Activated naive CD4-positive, alpha-beta T cell treated with anti-CD3 and anti-CD28 coated beads for 36 hours (primary cell): ENCODE measurements at regions of chr3 and their contacts with region 1.

Region 1: DNA sequence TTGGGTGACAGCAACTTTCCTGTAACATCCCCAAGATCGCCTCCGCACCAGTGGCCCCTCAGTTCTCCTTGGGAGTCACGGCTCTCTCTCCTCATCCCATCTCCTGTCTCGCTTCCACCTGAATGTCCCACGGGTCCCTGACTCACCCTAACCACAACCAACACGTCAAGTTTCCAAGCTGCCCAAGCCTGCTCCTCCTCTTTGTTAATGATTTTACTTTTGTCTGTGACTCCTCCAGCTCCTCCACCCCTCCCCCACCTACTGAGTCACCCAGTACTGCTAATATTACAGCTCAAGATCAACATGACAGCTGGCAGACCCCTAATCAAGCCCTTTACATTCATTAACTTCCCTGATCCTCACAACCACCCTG is 39.3 kb downstream of the BDH1 start:
- DNase-seq: peak; percentile 69
- H3K4me3 Mint-ChIP-seq: no peak overlapping the region
- H3K27ac Mint-ChIP-seq: peak overlapping the region; percentile 87
- H3K4me1 Mint-ChIP-seq: peaks cover 12% of the 10 kb centered on the region
- H3K27me3 Mint-ChIP-seq: no peaks in the 10 kb centered on the region

Region 2: DNA sequence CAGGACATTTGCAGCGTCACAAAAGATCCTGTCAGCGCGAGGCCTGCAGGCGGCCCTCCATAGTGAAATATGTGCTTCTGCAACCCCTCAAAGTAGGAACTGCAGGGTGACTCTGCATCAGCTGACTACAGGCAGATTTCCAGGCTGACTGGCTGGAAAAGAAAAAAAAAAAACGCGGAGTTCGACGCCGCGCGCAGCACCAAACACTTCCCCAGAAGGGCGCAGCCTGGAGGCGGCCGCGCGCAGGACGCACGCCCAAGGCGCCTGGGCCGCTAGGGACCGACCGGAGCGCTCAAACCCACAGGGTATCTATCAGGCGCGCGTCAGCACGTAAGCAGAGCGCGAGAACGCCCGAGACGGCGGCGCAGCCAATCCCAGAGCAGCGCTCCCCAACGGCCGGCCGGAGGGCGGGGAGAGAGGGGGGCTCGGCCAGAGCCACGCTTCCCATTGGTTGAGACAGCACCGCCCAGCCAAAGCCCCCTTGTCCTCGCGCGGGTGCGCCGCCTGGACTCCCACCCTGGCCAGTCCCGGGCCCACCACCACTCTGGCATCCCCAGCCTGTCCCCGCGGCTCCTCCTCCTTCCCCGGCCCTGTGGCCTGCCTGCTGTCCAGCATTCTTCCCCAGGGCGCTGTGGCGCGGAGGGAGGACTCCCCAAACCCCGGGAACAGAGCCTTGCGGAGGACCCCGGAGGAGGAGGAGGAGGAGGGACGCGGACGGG is 38.2 kb after region 1 on chr3:
- CTCF ChIA-PET with region 1: no interaction called
- intact Hi-C with region 1: loop called (anchors 2 kb)
- DNase-seq: peak; percentile 97
- H3K4me3 Mint-ChIP-seq: peak overlapping the region; percentile 86
- H3K27ac Mint-ChIP-seq: peak overlapping the region; percentile 88
- H3K4me1 Mint-ChIP-seq: peaks cover 24% of the 10 kb centered on the region
- H3K27me3 Mint-ChIP-seq: peaks cover 10% of the 10 kb centered on the region